ENCODE measurements at regions of chr9 and their contacts with region 1.

Region 1: DNA sequence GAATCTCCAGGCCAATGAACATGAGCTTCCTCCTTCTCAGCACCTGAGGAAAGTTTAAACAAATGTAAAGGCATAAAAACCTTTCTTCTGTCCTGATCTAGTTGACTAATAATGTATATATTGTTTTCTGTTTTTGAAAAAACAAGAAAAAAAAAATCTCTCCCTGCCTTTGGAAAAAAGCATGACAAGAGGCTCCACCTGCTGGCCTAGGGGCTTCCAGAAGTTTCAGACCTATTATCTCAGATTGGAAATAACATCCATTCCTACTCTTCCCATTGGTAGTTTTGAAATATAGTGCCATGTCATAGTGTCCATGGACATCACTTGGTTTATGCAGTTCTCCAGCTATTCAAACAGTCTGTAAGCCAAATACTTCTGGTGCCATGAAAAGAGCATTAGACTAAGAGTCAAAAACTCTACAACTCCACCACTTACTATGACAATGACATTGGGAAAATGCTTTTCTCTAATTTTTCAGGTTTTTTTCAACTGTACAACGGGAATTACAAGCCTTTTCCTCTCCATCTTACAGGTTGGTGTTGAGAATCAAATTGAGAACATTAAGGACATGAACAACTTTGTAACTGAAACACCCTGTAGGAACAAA is 409.6 kb upstream of the MPDZ start:
- DNase-seq: no peak
- ATAC-seq: peak in 1 of 2 donors; percentile 32
- H3K4me3 ChIP-seq: no peak overlapping the region
- H3K27ac ChIP-seq: peak overlapping the region; percentile 56 to 82 (median 78)
- H3K4me1 ChIP-seq: peaks cover 16 to 20% of the 10 kb centered on the region in 2 donors
- H3K27me3 ChIP-seq: no peaks in the 10 kb centered on the region
- CTCF ChIP-seq: peak in 4 of 5 experiments; percentile 23 to 62 (median 44)
- POLR2A ChIP-seq: no peak

Region 2: DNA sequence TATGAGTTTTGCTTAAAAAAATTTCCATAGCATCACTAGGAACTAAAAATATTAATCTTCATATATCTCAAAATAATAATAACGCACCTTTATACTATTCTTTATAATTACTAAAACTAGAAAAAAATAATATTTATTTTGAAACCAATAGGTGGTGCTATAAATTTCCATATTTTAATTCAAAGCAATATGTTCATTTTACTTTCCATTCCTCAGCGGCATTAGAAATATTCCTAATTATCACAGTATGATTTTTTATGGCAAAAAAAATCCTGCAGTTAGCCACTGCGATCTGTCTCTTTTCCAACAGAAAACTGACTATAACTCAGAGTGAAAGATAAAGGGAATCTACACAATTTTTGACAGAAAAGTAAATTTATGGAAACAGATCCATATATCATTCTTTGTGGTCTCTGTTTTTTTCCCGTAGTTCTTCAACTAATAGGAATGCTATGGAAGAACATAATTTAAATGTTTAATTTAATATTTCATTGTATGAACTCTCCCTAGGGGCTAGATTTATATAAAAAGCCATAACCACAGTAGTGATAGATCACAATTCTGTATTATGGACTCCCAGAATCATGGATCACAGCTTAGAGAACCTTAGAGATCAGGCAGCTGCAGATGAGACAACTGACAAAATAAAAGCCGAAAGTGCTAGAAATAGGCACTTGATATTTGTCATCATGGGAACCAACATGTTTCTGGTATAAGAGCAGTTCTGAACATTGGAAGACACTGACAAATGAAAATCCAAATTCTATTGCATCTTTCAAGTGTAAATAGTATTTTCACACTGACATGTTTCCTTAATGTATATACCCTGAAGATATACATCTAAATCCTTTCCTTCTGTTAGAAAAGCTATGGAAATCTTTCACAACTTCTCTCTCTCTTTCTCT is 241.9 kb before region 1 on chr9:
- in situ Hi-C with region 1: loop called in 1 of 4 experiments (anchors 10 kb)
- intact Hi-C with region 1: loop called (anchors 5 kb)
- DNase-seq: no peak
- ATAC-seq: no peak
- H3K4me3 ChIP-seq: peak overlapping the region in 3 of 4 donors; percentile 5 to 37 (median 19)
- H3K27ac ChIP-seq: peak overlapping the region; percentile 50 to 67 (median 62)
- H3K4me1 ChIP-seq: peaks cover 39 to 42% of the 10 kb centered on the region in 2 donors
- H3K27me3 ChIP-seq: no peaks in the 10 kb centered on the region
- CTCF ChIP-seq: peak in 2 of 5 experiments; percentile 23 to 46
- POLR2A ChIP-seq: no peak

Region 3: GRCh38 chr9:14400658-14400995 is 711.5 kb after region 1 on chr9:
- in situ Hi-C with region 1: loop called in 1 of 4 experiments (anchors 25 kb)
- intact Hi-C with region 1: no loop called
- DNase-seq: peak; percentile 19 to 55
- ATAC-seq: peak; percentile 74 to 85
- H3K4me3 ChIP-seq: peak overlapping the region in 2 of 4 donors; percentile 10 to 39
- H3K27ac ChIP-seq: peak overlapping the region; percentile 2 to 62 (median 10)
- H3K4me1 ChIP-seq: peaks cover 5 to 33% of the 10 kb centered on the region in 2 donors
- H3K27me3 ChIP-seq: no peaks in the 10 kb centered on the region
- CTCF ChIP-seq: peak; percentile 40 to 68 (median 56)
- POLR2A ChIP-seq: no peak

Measured in gastrocnemius medialis (tissue), 4 donors.